ENCODE measurements at regions of chr16 and their contacts with region 1.

Region 1: GRCh38 chr16:5837007-5837670 is 739.5 kb upstream of the EEF2KMT start:
- DNase-seq: no peak
- ATAC-seq: no peak
- H3K4me3 ChIP-seq: no peak overlapping the region
- H3K27ac ChIP-seq: no peak overlapping the region
- H3K4me1 ChIP-seq: no peaks in the 10 kb centered on the region
- H3K27me3 ChIP-seq: no peaks in the 10 kb centered on the region
- CTCF ChIP-seq: no peak
- POLR2A ChIP-seq: no peak
- RAD21 ChIP-seq: no peak

Region 2: GRCh38 chr16:5928476-5929065 is 91.4 kb after region 1 on chr16:
- CTCF ChIA-PET with region 1: no interaction called
- POLR2A ChIA-PET with region 1: no interaction called
- dilution Hi-C with region 1: no loop called
- in situ Hi-C with region 1: loop called (anchors 25 kb)
- intact Hi-C with region 1: no loop called
- DNase-seq: no peak
- ATAC-seq: no peak
- H3K4me3 ChIP-seq: no peak overlapping the region
- H3K27ac ChIP-seq: no peak overlapping the region
- H3K4me1 ChIP-seq: no peaks in the 10 kb centered on the region
- H3K27me3 ChIP-seq: no peaks in the 10 kb centered on the region
- CTCF ChIP-seq: no peak
- POLR2A ChIP-seq: no peak
- RAD21 ChIP-seq: no peak

Region 3: DNA sequence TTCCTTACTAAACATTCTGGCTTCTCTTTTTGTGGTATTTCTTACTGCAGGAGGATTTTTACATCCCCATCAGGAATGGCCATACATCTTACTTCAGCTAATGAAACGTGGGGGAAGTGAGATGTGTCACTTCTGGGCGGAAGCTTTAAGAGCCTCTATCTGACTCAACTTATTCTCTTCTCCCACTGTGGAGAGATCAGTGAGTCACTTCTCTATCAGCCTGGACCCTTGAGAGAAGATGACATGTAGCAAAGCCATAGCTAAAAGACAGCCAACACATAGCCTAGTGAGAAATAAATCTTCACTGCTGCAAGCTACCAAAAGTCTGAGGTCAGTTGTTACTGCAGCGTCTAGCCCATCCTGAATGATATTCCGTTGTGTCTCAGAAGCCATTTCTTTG is 428.8 kb after region 1 on chr16:
- CTCF ChIA-PET with region 1: no interaction called
- POLR2A ChIA-PET with region 1: no interaction called
- dilution Hi-C with region 1: no loop called
- in situ Hi-C with region 1: no loop called
- intact Hi-C with region 1: no loop called
- DNase-seq: no peak
- ATAC-seq: no peak
- H3K4me3 ChIP-seq: no peak overlapping the region
- H3K27ac ChIP-seq: no peak overlapping the region
- H3K4me1 ChIP-seq: no peaks in the 10 kb centered on the region
- H3K27me3 ChIP-seq: no peaks in the 10 kb centered on the region
- CTCF ChIP-seq: no peak
- POLR2A ChIP-seq: no peak
- RAD21 ChIP-seq: no peak